Common myeloid progenitor, CD34-positive (primary cell): ENCODE measurements at regions of chr20 and their contacts with region 1.

Region 1: GRCh38 chr20:5191829-5192569 is 65.2 kb downstream of the CDS2 start:
- DNase-seq: peak; percentile 77 to 88 (median 83)
- H3K4me3 ChIP-seq: no peak overlapping the region
- H3K27ac ChIP-seq: no peak overlapping the region
- H3K4me1 ChIP-seq: peaks cover 0 to 5% (median 0%) of the 10 kb centered on the region in 4 experiments
- H3K27me3 ChIP-seq: no peaks in the 10 kb centered on the region

Region 2: DNA sequence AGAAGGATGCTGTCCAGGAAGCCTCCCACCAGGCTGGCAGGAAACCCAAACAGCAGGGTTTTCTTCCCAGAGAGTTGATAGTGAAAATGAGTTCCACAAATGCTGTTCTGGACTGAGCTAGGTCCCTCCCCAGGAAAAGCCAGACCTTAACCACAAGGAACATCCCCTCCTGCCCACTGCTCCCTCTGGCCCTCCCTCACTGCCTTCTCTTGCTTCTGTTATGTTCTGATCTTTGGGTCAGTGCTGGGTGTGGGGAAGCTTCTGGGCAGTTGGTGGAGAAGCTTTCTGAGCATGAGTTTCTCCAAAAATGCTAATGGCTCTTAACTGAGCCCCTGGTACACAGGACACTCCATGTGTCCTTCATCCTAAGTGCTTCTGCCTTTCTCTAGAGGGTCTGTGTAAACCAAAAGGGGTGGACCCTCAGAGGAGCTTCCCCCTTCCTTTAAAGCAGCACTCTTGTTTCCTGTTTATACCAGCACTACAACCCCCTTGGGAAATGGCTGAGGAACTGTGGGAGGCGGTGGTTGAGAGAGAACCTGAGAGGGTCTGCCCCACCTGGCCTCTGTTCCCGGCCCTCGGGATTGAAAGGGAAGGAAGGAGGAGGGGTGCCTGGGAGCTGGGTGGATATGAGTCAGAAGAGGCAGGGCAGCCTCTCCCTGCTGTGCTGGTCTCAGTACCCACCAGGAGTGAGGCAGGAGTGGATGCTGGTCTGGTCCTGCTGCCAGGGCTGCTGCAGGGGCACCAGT is 23.2 kb before region 1 on chr20:
- CTCF ChIA-PET with region 1: interaction called, 14 read pairs
- POLR2A ChIA-PET with region 1: no interaction called
- DNase-seq: peak; percentile 27 to 72 (median 67)
- H3K4me3 ChIP-seq: peak overlapping the region in 5 of 7 experiments; percentile 20 to 51 (median 48)
- H3K27ac ChIP-seq: peak overlapping the region in 1 of 2 experiments; percentile 50
- H3K4me1 ChIP-seq: peaks cover 11 to 66% (median 35%) of the 10 kb centered on the region in 4 experiments
- H3K27me3 ChIP-seq: no peaks in the 10 kb centered on the region

Region 3: GRCh38 chr20:5181956-5182355 is 10.0 kb before region 1 on chr20:
- CTCF ChIA-PET with region 1: interaction called, 42 read pairs
- POLR2A ChIA-PET with region 1: no interaction called
- DNase-seq: no peak
- H3K4me3 ChIP-seq: no peak overlapping the region
- H3K27ac ChIP-seq: no peak overlapping the region
- H3K4me1 ChIP-seq: no peaks in the 10 kb centered on the region
- H3K27me3 ChIP-seq: no peaks in the 10 kb centered on the region

Region 4: DNA sequence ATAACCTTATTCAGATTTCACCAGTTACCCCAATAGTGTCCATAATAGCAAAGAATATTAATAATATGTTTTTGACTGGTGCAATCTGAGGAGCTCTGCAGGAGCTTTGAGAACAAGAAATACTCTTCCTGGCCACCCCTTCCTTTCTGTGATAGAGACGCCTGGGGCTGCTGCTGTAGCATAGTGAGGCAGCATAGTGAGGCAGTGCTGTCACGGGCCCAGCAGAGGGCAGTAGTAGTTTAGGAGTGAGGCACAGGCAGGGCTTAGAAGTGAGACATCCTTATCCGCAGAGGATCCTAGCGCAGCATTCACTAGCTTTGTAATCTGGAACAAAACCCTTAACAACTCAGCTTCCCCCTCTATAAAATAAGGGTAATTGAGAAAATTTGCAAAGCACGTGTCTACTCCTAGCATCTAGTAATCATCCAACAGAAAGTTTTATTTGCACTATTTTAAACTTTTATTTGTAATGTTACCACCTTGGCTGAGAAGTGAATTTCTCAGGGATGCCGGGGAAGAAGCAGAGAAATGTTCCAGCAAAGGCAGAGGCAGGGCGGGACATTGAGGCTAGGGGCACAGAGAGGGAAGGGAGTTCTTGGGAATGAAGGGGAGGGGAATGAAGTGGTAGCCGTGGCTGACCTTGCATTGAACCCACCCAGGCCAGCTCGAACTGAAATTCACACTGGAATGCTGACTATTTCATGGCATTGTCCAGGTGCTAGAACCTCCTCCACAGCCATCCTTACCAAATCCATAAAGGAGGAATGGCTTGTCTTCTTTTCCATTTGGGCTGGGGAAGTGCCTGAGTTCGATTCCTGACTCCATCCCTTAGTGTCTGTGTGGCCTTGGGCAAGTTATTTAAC is 13.6 kb after region 1 on chr20:
- CTCF ChIA-PET with region 1: interaction called, 24 read pairs
- POLR2A ChIA-PET with region 1: no interaction called
- DNase-seq: peak; percentile 69 to 81 (median 75)
- H3K4me3 ChIP-seq: no peak overlapping the region
- H3K27ac ChIP-seq: no peak overlapping the region
- H3K4me1 ChIP-seq: no peaks in the 10 kb centered on the region
- H3K27me3 ChIP-seq: no peaks in the 10 kb centered on the region

Region 5: DNA sequence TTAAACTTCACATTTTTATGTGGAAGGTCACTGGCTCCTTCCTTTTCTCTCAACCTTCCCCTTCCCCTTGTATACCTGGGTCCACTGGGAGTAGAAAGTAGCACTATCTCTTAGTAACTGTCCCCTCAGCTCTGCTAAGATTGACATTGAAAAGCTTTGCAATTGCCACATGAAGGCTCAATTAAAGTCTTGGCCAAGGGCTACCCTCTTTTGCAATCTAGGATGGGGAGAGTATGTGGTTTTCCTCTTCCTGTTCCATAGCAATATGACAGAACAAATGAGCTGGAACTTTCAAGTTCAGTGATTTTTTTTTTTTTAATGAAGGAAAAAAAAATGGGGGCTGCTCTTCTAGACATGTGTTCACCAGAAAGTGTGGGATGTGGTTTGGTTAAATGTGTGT is 87.7 kb after region 1 on chr20:
- CTCF ChIA-PET with region 1: no interaction called
- POLR2A ChIA-PET with region 1: no interaction called
- DNase-seq: no peak
- H3K4me3 ChIP-seq: no peak overlapping the region
- H3K27ac ChIP-seq: no peak overlapping the region
- H3K4me1 ChIP-seq: no peaks in the 10 kb centered on the region
- H3K27me3 ChIP-seq: peaks cover 0 to 2% (median 0%) of the 10 kb centered on the region in 5 experiments